Natural killer cell (primary cell): ENCODE measurements at regions of chr2 and their contacts with region 1.

Region 1: DNA sequence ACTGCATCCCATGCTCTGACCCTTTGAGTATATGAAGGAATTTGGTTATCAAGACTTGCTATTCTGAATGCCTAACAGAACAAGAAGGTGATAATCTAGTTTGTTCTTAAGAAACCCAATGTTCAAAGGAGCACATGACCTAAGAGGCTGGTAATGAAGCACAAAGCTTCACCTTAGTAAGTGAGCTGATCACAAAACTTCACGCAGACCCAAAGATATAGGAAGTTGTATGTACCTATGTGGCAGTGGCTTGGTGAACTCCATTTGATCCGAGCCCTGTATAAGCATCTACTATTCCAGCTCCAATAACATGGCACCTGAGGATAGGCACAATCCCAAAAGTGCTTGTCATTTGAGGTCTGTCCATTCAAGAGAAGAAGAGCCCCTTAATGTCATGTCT is 78.6 kb downstream of the ANKRD44 start:
- DNase-seq: peak in 1 of 2 donors; percentile 64
- ATAC-seq: peak in 1 of 3 donors; percentile 57
- H3K4me3 ChIP-seq: no peak overlapping the region
- H3K4me3 Mint-ChIP-seq: no peak overlapping the region
- H3K27ac ChIP-seq: no peak overlapping the region
- H3K27ac Mint-ChIP-seq: peak overlapping the region; percentile 89 to 93
- H3K4me1 ChIP-seq: peaks cover 43% of the 10 kb centered on the region
- H3K4me1 Mint-ChIP-seq: peaks cover 95 to 97% of the 10 kb centered on the region in 2 donors
- H3K27me3 ChIP-seq: no peaks in the 10 kb centered on the region
- H3K27me3 Mint-ChIP-seq: no peaks in the 10 kb centered on the region
- CTCF ChIP-seq: no peak

Region 2: DNA sequence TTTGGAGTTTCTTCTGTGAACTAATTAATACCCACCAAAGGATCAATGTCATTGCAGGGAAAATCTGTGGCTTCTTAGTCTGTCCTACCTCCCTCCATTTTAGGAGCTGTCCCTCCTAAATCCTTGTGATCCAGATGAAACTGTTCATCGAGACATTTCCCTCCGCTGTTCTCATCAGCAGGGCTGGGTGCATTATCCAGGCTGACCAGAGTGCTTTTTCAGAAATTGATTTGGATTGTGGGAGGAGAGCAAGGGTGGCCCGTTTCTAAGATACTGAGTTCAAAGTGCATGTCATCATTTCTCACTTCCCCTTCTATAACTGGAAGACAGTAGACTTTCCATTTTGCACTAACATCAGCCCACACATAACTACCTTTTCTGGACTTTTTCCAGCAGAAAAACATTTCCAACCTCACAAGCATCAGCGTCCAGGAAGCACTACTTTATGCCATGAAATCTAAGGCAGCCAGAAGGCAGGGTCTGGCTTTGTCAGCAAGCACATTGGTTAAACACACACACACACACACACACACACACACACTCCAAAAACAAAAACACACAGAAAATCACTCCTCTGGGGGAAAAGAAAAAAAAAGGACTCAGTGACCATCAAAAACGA is 15.5 kb before region 1 on chr2:
- intact Hi-C with region 1: loop called (anchors 2 kb)
- DNase-seq: peak in 1 of 2 donors; percentile 39
- ATAC-seq: no peak
- H3K4me3 ChIP-seq: no peak overlapping the region
- H3K4me3 Mint-ChIP-seq: peak overlapping the region; percentile 70
- H3K27ac ChIP-seq: peak overlapping the region; percentile 61
- H3K27ac Mint-ChIP-seq: peak overlapping the region; percentile 91 to 96
- H3K4me1 ChIP-seq: peaks cover 48% of the 10 kb centered on the region
- H3K4me1 Mint-ChIP-seq: peaks cover 67 to 72% of the 10 kb centered on the region in 2 donors
- H3K27me3 ChIP-seq: no peaks in the 10 kb centered on the region
- H3K27me3 Mint-ChIP-seq: no peaks in the 10 kb centered on the region
- CTCF ChIP-seq: no peak

Region 3: GRCh38 chr2:197461057-197461456 is 229.0 kb after region 1 on chr2:
- intact Hi-C with region 1: no loop called
- DNase-seq: no peak
- ATAC-seq: no peak
- H3K4me3 ChIP-seq: no peak overlapping the region
- H3K4me3 Mint-ChIP-seq: no peak overlapping the region
- H3K27ac ChIP-seq: no peak overlapping the region
- H3K27ac Mint-ChIP-seq: peak overlapping the region in 1 of 2 donors; percentile 52
- H3K4me1 ChIP-seq: no peaks in the 10 kb centered on the region
- H3K4me1 Mint-ChIP-seq: peaks cover 30 to 42% of the 10 kb centered on the region in 2 donors
- H3K27me3 ChIP-seq: no peaks in the 10 kb centered on the region
- H3K27me3 Mint-ChIP-seq: no peaks in the 10 kb centered on the region
- CTCF ChIP-seq: no peak